CD4-positive, alpha-beta T cell (primary cell): ENCODE measurements at regions of chr7 and their contacts with region 1.

Region 1: GRCh38 chr7:109893246-109893645 is 1197.7 kb upstream of the LRRN3 start:
- DNase-seq: no peak
- ATAC-seq: no peak
- H3K4me3 ChIP-seq: no peak overlapping the region
- H3K4me3 Mint-ChIP-seq: no peak overlapping the region
- H3K27ac ChIP-seq: no peak overlapping the region
- H3K27ac Mint-ChIP-seq: no peak overlapping the region
- H3K4me1 ChIP-seq: no peaks in the 10 kb centered on the region
- H3K4me1 Mint-ChIP-seq: no peaks in the 10 kb centered on the region
- H3K27me3 ChIP-seq: no peaks in the 10 kb centered on the region
- H3K27me3 Mint-ChIP-seq: no peaks in the 10 kb centered on the region
- CTCF ChIP-seq: no peak

Region 2: DNA sequence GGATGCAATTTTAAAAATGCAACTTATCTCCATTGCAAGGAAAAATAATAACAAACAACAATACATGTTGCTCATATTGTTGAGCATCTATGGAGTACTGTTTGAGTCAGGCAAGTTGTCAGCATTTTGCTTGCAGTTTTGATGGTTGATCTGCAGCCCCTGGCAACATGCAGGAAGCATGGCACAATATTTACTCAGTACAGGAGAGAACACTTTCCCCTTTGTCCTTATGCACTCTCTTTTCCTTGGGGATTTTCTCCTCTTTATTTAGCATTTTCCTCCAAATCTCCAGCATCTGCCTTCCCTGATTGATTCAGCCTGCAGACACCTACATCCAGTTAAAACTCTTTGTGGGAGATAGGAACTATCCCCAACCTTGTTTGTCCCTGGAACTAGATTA is 577.2 kb after region 1 on chr7:
- CTCF ChIA-PET with region 1: no interaction called
- POLR2A ChIA-PET with region 1: no interaction called
- intact Hi-C with region 1: loop called in 1 of 2 experiments (anchors 5 kb)
- DNase-seq: no peak
- ATAC-seq: no peak
- H3K4me3 ChIP-seq: no peak overlapping the region
- H3K4me3 Mint-ChIP-seq: no peak overlapping the region
- H3K27ac ChIP-seq: no peak overlapping the region
- H3K27ac Mint-ChIP-seq: no peak overlapping the region
- H3K4me1 ChIP-seq: no peaks in the 10 kb centered on the region
- H3K4me1 Mint-ChIP-seq: no peaks in the 10 kb centered on the region
- H3K27me3 ChIP-seq: no peaks in the 10 kb centered on the region
- H3K27me3 Mint-ChIP-seq: peaks cover 5% of the 10 kb centered on the region
- CTCF ChIP-seq: no peak